OCI-LY7 (cell line): ENCODE measurements at regions of chr12 and their contacts with region 1.

Region 1: GRCh38 chr12:22856178-22856577 is 231.2 kb downstream of the ETNK1 start:
- DNase-seq: peak; percentile 30
- H3K4me3 ChIP-seq: no peak overlapping the region
- H3K27ac ChIP-seq: no peak overlapping the region
- H3K4me1 ChIP-seq: no peaks in the 10 kb centered on the region
- CTCF ChIP-seq: peak; percentile 87

Region 2: GRCh38 chr12:23055004-23055403 is 198.8 kb after region 1 on chr12:
- CTCF ChIA-PET with region 1: no interaction called
- POLR2A ChIA-PET with region 1: no interaction called
- intact Hi-C with region 1: loop called (anchors 2 kb)
- DNase-seq: peak; percentile 18
- H3K4me3 ChIP-seq: no peak overlapping the region
- H3K27ac ChIP-seq: no peak overlapping the region
- H3K4me1 ChIP-seq: no peaks in the 10 kb centered on the region
- CTCF ChIP-seq: peak; percentile 75

Region 3: GRCh38 chr12:23217158-23217557 is 361.0 kb after region 1 on chr12:
- CTCF ChIA-PET with region 1: no interaction called
- POLR2A ChIA-PET with region 1: no interaction called
- intact Hi-C with region 1: loop called (anchors 10 kb)
- DNase-seq: no peak
- H3K4me3 ChIP-seq: no peak overlapping the region
- H3K27ac ChIP-seq: no peak overlapping the region
- H3K4me1 ChIP-seq: no peaks in the 10 kb centered on the region
- CTCF ChIP-seq: no peak

Region 4: GRCh38 chr12:24778486-24779304 is 1922.5 kb after region 1 on chr12:
- CTCF ChIA-PET with region 1: no interaction called
- POLR2A ChIA-PET with region 1: no interaction called
- intact Hi-C with region 1: loop called (anchors 10 kb)
- DNase-seq: peak; percentile 52
- H3K4me3 ChIP-seq: no peak overlapping the region
- H3K27ac ChIP-seq: no peak overlapping the region
- H3K4me1 ChIP-seq: no peaks in the 10 kb centered on the region
- CTCF ChIP-seq: peak; percentile 72